Endothelial cell of umbilical vein (primary cell): ENCODE measurements at regions of chr1 and their contacts with region 1.

Region 1: GRCh38 chr1:28456078-28456477 is 49.8 kb upstream of the RCC1 start:
- DNase-seq: peak; percentile 92
- H3K4me3 ChIP-seq: no peak overlapping the region
- H3K27ac ChIP-seq: peak overlapping the region; percentile 83
- H3K4me1 ChIP-seq: peaks cover 56% of the 10 kb centered on the region
- H3K27me3 ChIP-seq: no peaks in the 10 kb centered on the region
- CTCF ChIP-seq: no peak
- POLR2A ChIP-seq: peak; percentile 80

Region 2: GRCh38 chr1:28421744-28422143 is 34.3 kb before region 1 on chr1:
- CTCF ChIA-PET with region 1: no interaction called
- POLR2A ChIA-PET with region 1: no interaction called
- dilution Hi-C with region 1: no loop called
- intact Hi-C with region 1: loop called (anchors 2 kb)
- DNase-seq: peak; percentile 76
- H3K4me3 ChIP-seq: no peak overlapping the region
- H3K27ac ChIP-seq: peak overlapping the region; percentile 31
- H3K4me1 ChIP-seq: peaks cover 32% of the 10 kb centered on the region
- H3K27me3 ChIP-seq: no peaks in the 10 kb centered on the region
- CTCF ChIP-seq: no peak
- POLR2A ChIP-seq: no peak

Region 3: DNA sequence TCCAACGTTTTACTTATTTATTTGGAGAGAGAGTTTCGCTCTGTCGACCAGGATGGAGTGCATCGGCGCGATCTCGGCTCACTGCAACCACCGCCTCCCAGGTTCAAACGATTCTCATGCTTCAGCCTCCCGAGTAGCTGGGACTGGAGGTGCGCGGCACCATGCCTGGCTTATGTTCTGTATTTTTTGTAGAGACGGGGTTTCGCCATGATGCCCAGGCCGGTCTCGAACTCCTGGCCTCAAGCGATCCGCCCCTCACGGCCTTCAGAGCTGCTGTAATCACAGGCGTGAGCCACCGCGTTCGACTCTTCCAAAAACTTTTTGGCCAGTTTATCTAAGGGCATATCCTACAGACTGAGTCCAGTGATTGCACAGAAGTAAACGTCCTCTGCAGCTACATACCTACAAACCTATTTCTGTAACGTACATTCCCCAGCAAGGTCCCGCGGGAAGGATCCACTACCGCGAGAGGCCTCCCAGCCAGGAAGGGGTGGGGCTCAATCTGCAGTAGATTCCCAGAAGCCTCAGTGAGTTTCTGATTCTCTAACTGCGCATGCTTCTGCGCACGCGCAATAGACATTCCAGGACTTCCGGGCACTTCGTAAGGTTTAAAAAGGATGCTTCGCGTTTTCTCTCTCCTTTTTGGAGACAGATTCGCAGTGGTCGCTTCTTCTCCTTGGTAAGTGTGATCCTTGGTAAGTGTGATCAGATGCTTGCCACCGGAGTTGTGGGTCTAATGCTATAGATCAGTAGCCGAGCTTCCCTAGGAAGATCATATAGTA is 49.5 kb after region 1 on chr1 and contains the start of gene RCC1:
- CTCF ChIA-PET with region 1: no interaction called
- POLR2A ChIA-PET with region 1: interaction called, 6 read pairs
- dilution Hi-C with region 1: no loop called
- intact Hi-C with region 1: loop called (anchors 2 kb)
- DNase-seq: peak; percentile 100
- H3K4me3 ChIP-seq: peak within 1 kb of the TSS; percentile 58 to 100 (median 87)
- H3K27ac ChIP-seq: peak within 1 kb of the TSS; percentile 78
- H3K4me1 ChIP-seq: peaks cover 29% of the 10 kb centered on the region
- H3K27me3 ChIP-seq: no peaks in the 10 kb centered on the region
- CTCF ChIP-seq: no peak
- POLR2A ChIP-seq: peak; percentile 100
- total RNA-seq, gene RCC1: 72.7 and 77.7 TPM in 2 replicates